CD4-positive, alpha-beta memory T cell (primary cell): ENCODE measurements at regions of chr7 and their contacts with region 1.

Region 1: GRCh38 chr7:39746103-39746819 is 122.9 kb downstream of the RALA start:
- DNase-seq: peak; percentile 42 to 55 (median 52)
- H3K4me3 ChIP-seq: no peak overlapping the region
- H3K4me3 Mint-ChIP-seq: peak overlapping the region in 2 of 8 donors; percentile 15 to 20
- H3K27ac ChIP-seq: no peak overlapping the region
- H3K27ac Mint-ChIP-seq: peak overlapping the region in 4 of 7 donors; percentile 20 to 81 (median 54)
- H3K4me1 ChIP-seq: peaks cover 3% of the 10 kb centered on the region
- H3K4me1 Mint-ChIP-seq: peaks cover 5 to 6% (median 5%) of the 10 kb centered on the region in 4 donors
- H3K27me3 ChIP-seq: no peaks in the 10 kb centered on the region
- H3K27me3 Mint-ChIP-seq: no peaks in the 10 kb centered on the region

Region 2: DNA sequence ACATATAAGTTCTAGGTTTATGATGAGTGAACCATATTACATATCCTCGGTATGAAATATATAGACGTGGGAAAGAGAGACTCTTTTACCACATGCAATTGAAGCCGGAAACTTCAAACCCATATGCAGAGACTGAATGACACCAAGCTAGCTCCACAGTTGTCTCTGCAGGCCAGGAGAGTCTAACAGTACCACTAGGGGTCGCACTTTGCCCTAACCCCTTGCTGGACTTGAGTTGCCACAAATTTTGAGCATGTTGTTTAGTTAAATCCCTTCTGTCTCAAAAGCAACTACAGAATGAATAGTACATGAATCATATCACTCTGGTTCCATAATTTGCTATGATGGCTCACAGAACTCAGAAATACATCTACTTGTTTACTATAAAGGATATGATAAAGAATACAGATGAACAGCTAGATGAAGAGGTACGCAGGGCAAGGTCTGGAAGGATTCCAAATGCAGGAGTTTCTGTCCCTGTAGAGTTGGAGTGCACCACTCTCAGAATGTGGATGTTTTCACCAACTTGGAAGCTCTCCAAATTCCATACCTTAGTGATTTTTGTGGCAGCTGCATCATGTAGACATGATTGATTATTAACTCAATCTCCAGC is 292.4 kb before region 1 on chr7:
- CTCF ChIA-PET with region 1: no interaction called
- POLR2A ChIA-PET with region 1: no interaction called
- intact Hi-C with region 1: loop called (anchors 1 kb)
- DNase-seq: peak in 4 of 5 donors; percentile 26 to 35 (median 32)
- H3K4me3 ChIP-seq: no peak overlapping the region
- H3K4me3 Mint-ChIP-seq: no peak overlapping the region
- H3K27ac ChIP-seq: no peak overlapping the region
- H3K27ac Mint-ChIP-seq: no peak overlapping the region
- H3K4me1 ChIP-seq: no peaks in the 10 kb centered on the region
- H3K4me1 Mint-ChIP-seq: peaks cover 0 to 1% (median 0%) of the 10 kb centered on the region in 4 donors
- H3K27me3 ChIP-seq: no peaks in the 10 kb centered on the region
- H3K27me3 Mint-ChIP-seq: peaks cover 10 to 12% of the 10 kb centered on the region in 2 donors

Region 3: DNA sequence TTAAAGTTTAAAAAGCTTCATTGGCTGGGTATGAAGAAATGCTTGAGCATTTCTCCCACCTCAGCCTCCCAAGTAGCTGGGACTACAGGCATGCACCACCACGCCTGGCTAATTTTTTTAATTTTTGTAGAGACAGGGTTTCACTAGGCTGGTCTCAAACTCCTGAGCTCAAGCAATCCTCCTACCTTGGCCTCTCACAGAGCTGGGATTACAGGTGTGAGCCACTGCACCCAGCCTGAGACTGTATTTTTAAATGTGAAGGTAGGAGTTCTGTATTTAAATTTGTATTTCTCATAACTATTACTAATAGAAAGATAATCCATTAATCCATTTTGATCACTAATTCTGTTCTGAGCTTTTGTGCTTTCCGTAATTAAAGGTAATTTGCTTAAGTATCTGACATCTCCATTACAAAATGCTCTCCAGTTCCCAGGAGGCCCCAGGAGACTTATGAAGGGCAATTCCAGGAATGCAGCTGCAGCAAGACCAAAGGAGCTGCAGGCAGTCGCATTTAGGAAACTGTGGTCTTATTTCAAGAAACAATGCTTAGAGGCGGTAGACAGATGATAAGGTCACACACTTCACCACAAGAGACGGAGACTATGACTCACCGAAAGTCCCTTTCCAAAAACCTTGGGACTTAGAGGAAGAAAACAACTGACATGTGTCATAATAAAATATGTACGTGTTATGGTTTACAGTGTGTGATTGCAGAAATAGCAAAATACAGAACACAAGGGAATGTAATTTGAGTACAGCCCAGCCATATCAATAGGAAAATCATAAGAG is 156.7 kb before region 1 on chr7:
- CTCF ChIA-PET with region 1: interaction called, 24 read pairs
- POLR2A ChIA-PET with region 1: interaction called, 4 read pairs
- intact Hi-C with region 1: no loop called
- DNase-seq: peak; percentile 62 to 94 (median 68)
- H3K4me3 ChIP-seq: no peak overlapping the region
- H3K4me3 Mint-ChIP-seq: peak overlapping the region in 7 of 8 donors; percentile 19 to 73 (median 52)
- H3K27ac ChIP-seq: no peak overlapping the region
- H3K27ac Mint-ChIP-seq: peak overlapping the region; percentile 63 to 92 (median 78)
- H3K4me1 ChIP-seq: peaks cover 34% of the 10 kb centered on the region
- H3K4me1 Mint-ChIP-seq: peaks cover 15 to 47% (median 18%) of the 10 kb centered on the region in 4 donors
- H3K27me3 ChIP-seq: no peaks in the 10 kb centered on the region
- H3K27me3 Mint-ChIP-seq: no peaks in the 10 kb centered on the region

Region 4: DNA sequence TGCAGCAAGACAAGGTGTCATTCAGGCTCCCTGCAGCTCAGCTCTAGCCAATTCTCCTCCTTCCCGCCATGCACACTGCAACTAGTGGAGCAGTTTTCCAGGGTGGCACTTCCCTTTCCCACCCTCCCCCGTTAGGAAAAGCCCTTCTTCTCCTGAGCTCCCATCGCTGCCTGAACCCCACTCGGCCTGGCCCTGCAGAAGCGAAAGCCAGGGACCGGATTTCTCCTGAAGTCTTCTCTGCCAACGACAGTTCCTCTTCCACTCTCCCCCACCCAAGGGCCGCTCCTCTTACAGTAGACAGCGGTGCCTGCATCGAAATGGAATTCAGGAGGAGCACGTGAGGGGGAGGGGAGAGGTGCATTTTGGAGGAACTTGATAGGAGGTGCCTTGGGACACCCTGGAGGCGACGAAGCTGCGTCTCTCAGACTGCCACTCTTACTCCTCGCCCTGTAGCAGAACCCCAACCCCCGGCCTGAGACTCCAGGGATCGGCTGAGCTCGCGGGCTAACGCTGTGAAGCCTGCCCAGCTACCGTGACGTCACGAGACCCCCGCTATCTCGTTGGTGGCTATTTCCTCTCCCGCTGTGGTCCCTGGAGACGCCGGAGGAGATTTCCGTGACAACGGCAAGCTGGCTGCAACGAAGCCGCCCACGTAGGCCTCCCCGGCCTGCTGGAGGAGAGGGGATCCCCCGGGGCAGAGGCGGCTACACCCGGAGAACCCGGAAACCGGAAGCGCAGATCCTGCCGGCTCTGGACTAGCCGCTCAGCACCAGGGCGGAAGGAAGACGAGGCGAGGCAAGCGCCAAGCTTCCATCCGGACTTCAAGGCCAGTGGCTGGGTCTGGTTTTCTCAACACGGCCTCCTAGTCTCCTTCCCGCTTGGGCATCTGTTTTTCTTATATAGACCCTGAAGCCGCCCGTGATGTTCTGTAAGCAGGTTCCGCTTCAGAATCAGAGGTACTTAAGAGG is 13.1 kb before region 1 on chr7:
- CTCF ChIA-PET with region 1: interaction called, 78 read pairs
- POLR2A ChIA-PET with region 1: interaction called, 13 read pairs
- intact Hi-C with region 1: loop called (anchors 1 kb)
- DNase-seq: peak; percentile 87 to 97 (median 94)
- H3K4me3 ChIP-seq: peak overlapping the region; percentile 37 to 84
- H3K4me3 Mint-ChIP-seq: peak overlapping the region; percentile 90 to 100 (median 96)
- H3K27ac ChIP-seq: peak overlapping the region; percentile 88
- H3K27ac Mint-ChIP-seq: peak overlapping the region; percentile 94 to 100 (median 97)
- H3K4me1 ChIP-seq: peaks cover 41% of the 10 kb centered on the region
- H3K4me1 Mint-ChIP-seq: peaks cover 23 to 56% (median 39%) of the 10 kb centered on the region in 4 donors
- H3K27me3 ChIP-seq: no peaks in the 10 kb centered on the region
- H3K27me3 Mint-ChIP-seq: peaks cover 0 to 1% of the 10 kb centered on the region in 2 donors

Region 5: GRCh38 chr7:40680657-40681056 is 934.4 kb after region 1 on chr7:
- CTCF ChIA-PET with region 1: no interaction called
- POLR2A ChIA-PET with region 1: no interaction called
- intact Hi-C with region 1: no loop called
- DNase-seq: no peak
- H3K4me3 ChIP-seq: no peak overlapping the region
- H3K4me3 Mint-ChIP-seq: no peak overlapping the region
- H3K27ac ChIP-seq: no peak overlapping the region
- H3K27ac Mint-ChIP-seq: no peak overlapping the region
- H3K4me1 ChIP-seq: no peaks in the 10 kb centered on the region
- H3K4me1 Mint-ChIP-seq: no peaks in the 10 kb centered on the region
- H3K27me3 ChIP-seq: no peaks in the 10 kb centered on the region
- H3K27me3 Mint-ChIP-seq: no peaks in the 10 kb centered on the region

Region 6: DNA sequence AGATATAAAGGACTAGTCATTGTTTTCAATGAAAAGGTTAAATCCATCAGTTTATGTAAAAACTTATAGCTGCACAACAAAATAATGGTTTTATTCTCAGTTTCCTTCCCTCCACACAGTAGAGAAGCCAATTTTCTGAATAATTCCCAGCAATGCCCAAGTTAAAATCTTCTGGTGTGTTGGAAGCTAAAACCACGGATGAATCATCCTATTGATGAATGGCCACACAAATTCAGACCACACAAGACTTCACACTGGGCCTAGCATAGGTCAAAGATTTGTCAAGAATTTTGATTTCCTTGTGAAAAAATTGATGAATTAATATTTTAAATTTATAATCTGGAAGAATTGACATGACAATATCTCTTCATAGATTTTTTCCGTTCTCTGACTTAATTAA is 1339.0 kb after region 1 on chr7:
- CTCF ChIA-PET with region 1: no interaction called
- POLR2A ChIA-PET with region 1: no interaction called
- intact Hi-C with region 1: no loop called
- DNase-seq: no peak
- H3K4me3 ChIP-seq: no peak overlapping the region
- H3K4me3 Mint-ChIP-seq: no peak overlapping the region
- H3K27ac ChIP-seq: no peak overlapping the region
- H3K27ac Mint-ChIP-seq: no peak overlapping the region
- H3K4me1 ChIP-seq: no peaks in the 10 kb centered on the region
- H3K4me1 Mint-ChIP-seq: no peaks in the 10 kb centered on the region
- H3K27me3 ChIP-seq: no peaks in the 10 kb centered on the region
- H3K27me3 Mint-ChIP-seq: no peaks in the 10 kb centered on the region